B cell (primary cell): ENCODE measurements at regions of chr11 and their contacts with region 1.

Region 1: GRCh38 chr11:43311791-43312607 is at the start of gene API5:
- DNase-seq: peak; percentile 96
- ATAC-seq: peak; percentile 97
- H3K4me3 ChIP-seq: peak within 1 kb of the TSS; percentile 86 to 97 (median 95)
- H3K4me3 Mint-ChIP-seq: peak within 1 kb of the TSS; percentile 96
- H3K27ac ChIP-seq: peak within 1 kb of the TSS; percentile 67 to 84
- H3K27ac Mint-ChIP-seq: peak within 1 kb of the TSS; percentile 97
- H3K4me1 ChIP-seq: peaks cover 18 to 20% of the 10 kb centered on the region in 2 donors
- H3K4me1 Mint-ChIP-seq: peaks cover 45% of the 10 kb centered on the region
- H3K27me3 ChIP-seq: no peaks in the 10 kb centered on the region
- H3K27me3 Mint-ChIP-seq: no peaks in the 10 kb centered on the region
- CTCF ChIP-seq: peak; percentile 83
- total RNA-seq, gene API5: 88.3 and 94.7 TPM in 2 replicates

Region 2: DNA sequence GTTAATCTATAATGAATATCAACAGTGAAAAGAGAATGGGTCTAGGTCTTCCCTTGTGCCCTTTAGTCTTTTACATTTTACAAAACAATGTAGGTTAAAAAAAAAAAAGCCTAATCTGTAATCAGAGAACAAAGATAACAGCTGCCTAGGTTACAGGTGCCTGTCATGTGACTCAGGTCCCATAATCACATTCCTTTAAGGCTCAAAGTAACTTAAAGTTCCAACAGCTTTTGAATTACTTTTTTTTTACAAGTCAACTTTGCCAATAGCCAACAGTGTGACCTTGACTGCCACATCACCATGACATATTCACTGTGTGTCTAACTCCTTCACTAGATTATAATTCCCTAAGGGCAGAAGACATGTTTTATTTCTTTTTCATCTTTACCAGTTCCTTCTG is 237.2 kb before region 1 on chr11:
- CTCF ChIA-PET with region 1: no interaction called
- POLR2A ChIA-PET with region 1: no interaction called
- intact Hi-C with region 1: no loop called
- DNase-seq: no peak
- ATAC-seq: no peak
- H3K4me3 ChIP-seq: no peak overlapping the region
- H3K4me3 Mint-ChIP-seq: no peak overlapping the region
- H3K27ac ChIP-seq: no peak overlapping the region
- H3K27ac Mint-ChIP-seq: no peak overlapping the region
- H3K4me1 ChIP-seq: no peaks in the 10 kb centered on the region
- H3K4me1 Mint-ChIP-seq: no peaks in the 10 kb centered on the region
- H3K27me3 ChIP-seq: peaks cover 0 to 4% (median 0%) of the 10 kb centered on the region in 4 experiments
- H3K27me3 Mint-ChIP-seq: peaks cover 4% of the 10 kb centered on the region
- CTCF ChIP-seq: no peak

Region 3: GRCh38 chr11:43222215-43222614 is 89.8 kb before region 1 on chr11:
- CTCF ChIA-PET with region 1: no interaction called
- POLR2A ChIA-PET with region 1: no interaction called
- intact Hi-C with region 1: no loop called
- DNase-seq: no peak
- ATAC-seq: no peak
- H3K4me3 ChIP-seq: no peak overlapping the region
- H3K4me3 Mint-ChIP-seq: no peak overlapping the region
- H3K27ac ChIP-seq: no peak overlapping the region
- H3K27ac Mint-ChIP-seq: no peak overlapping the region
- H3K4me1 ChIP-seq: no peaks in the 10 kb centered on the region
- H3K4me1 Mint-ChIP-seq: no peaks in the 10 kb centered on the region
- H3K27me3 ChIP-seq: no peaks in the 10 kb centered on the region
- H3K27me3 Mint-ChIP-seq: no peaks in the 10 kb centered on the region
- CTCF ChIP-seq: no peak

Region 4: DNA sequence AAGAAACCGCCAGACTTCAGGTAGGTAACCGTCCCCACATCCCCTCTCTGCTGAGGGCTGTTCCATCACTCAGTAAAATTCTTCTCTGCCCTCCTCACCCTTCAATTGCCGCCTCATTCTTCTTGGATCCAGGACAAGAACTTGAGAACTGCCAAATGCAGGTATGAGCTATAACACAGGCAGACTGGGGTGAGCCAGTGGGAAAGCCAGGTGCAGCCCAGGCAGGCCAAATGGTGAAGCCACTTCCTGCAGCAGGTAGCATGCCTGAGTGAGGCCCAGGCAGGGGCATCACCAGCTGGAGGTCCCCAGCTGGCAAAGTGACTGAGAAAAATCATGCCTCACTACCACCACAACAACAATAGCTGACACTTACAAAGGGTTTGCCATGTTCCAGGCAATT is 22.6 kb before region 1 on chr11:
- CTCF ChIA-PET with region 1: no interaction called
- POLR2A ChIA-PET with region 1: no interaction called
- intact Hi-C with region 1: no loop called
- DNase-seq: no peak
- ATAC-seq: no peak
- H3K4me3 ChIP-seq: no peak overlapping the region
- H3K4me3 Mint-ChIP-seq: no peak overlapping the region
- H3K27ac ChIP-seq: no peak overlapping the region
- H3K27ac Mint-ChIP-seq: no peak overlapping the region
- H3K4me1 ChIP-seq: no peaks in the 10 kb centered on the region
- H3K4me1 Mint-ChIP-seq: no peaks in the 10 kb centered on the region
- H3K27me3 ChIP-seq: peaks cover 0 to 6% (median 4%) of the 10 kb centered on the region in 4 experiments
- H3K27me3 Mint-ChIP-seq: peaks cover 10% of the 10 kb centered on the region
- CTCF ChIP-seq: no peak

Region 5: GRCh38 chr11:43643898-43644620 is 332.1 kb after region 1 on chr11:
- CTCF ChIA-PET with region 1: no interaction called
- POLR2A ChIA-PET with region 1: no interaction called
- intact Hi-C with region 1: loop called (anchors 2 kb)
- DNase-seq: peak; percentile 87
- ATAC-seq: peak; percentile 99
- H3K4me3 ChIP-seq: peak overlapping the region; percentile 67 to 94 (median 84)
- H3K4me3 Mint-ChIP-seq: peak overlapping the region; percentile 89
- H3K27ac ChIP-seq: peak overlapping the region; percentile 32 to 74
- H3K27ac Mint-ChIP-seq: peak overlapping the region; percentile 78
- H3K4me1 ChIP-seq: peaks cover 7 to 10% of the 10 kb centered on the region in 2 donors
- H3K4me1 Mint-ChIP-seq: peaks cover 22% of the 10 kb centered on the region
- H3K27me3 ChIP-seq: peaks cover 0 to 17% (median 8%) of the 10 kb centered on the region in 4 experiments
- H3K27me3 Mint-ChIP-seq: peaks cover 16% of the 10 kb centered on the region
- CTCF ChIP-seq: no peak

Region 6: GRCh38 chr11:43880640-43881159 is 568.7 kb after region 1 on chr11 and contains the start of gene ALKBH3:
- CTCF ChIA-PET with region 1: no interaction called
- POLR2A ChIA-PET with region 1: no interaction called
- intact Hi-C with region 1: loop called (anchors 5 kb)
- DNase-seq: peak; percentile 93
- ATAC-seq: peak; percentile 99
- H3K4me3 ChIP-seq: peak within 1 kb of the TSS; percentile 54 to 96 (median 82)
- H3K4me3 Mint-ChIP-seq: peak within 1 kb of the TSS; percentile 95
- H3K27ac ChIP-seq: peak within 1 kb of the TSS; percentile 3 to 62
- H3K27ac Mint-ChIP-seq: peak within 1 kb of the TSS; percentile 82
- H3K4me1 ChIP-seq: peaks cover 14 to 15% of the 10 kb centered on the region in 2 donors
- H3K4me1 Mint-ChIP-seq: peaks cover 19% of the 10 kb centered on the region
- H3K27me3 ChIP-seq: peaks cover 0 to 26% (median 8%) of the 10 kb centered on the region in 4 experiments
- H3K27me3 Mint-ChIP-seq: peaks cover 26% of the 10 kb centered on the region
- CTCF ChIP-seq: no peak
- total RNA-seq, gene ALKBH3: 26.7 and 27.3 TPM in 2 replicates

Region 7: DNA sequence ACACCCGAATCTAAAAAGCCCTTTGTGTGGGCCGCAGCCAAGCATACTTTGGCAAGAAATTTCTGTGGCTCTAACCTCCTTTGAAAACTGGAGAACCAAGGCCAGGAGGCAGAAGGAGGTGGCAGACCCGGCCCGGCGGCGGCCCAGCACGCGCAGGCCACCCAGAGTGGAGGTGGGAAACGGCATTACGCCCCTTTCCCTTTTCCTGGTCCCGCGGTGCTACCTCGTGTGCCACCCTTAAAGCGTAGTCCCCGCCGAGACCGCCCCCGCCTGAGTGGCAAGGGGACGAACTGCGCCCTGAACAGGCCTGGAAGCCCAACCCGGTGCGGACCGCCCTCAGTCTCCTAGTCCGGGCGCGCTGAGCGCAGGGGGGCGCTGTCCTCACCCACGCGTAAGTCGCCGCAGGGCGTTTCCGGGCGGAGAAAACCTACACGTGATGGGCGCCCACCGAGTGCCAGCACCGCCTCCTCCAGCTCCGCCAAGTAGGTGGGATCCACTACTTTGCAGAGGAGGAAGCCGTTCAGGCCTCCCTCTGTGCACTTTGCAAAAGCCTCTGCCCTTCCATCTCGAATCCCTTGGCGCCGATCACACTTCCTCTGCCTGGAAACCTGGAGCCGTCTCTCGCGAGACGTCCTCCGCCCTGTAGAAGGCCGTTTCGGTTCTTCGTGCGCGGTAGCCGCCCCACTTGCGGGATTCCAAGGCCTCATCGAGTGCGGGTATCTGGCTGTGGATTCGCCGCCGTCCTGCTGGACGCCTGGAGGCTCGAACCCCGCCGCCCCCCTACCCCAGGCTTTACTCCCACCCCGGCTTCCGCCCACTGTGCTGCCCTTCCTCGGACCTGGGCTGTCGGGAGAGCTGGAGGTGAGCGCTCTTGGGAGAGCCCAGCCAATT is 754.1 kb after region 1 on chr11 and contains the start of gene ACCS:
- CTCF ChIA-PET with region 1: no interaction called
- POLR2A ChIA-PET with region 1: no interaction called
- intact Hi-C with region 1: loop called (anchors 10 kb)
- DNase-seq: peak; percentile 94
- ATAC-seq: peak; percentile 96
- H3K4me3 ChIP-seq: peak within 1 kb of the TSS; percentile 32 to 85 (median 81)
- H3K4me3 Mint-ChIP-seq: peak within 1 kb of the TSS; percentile 97
- H3K27ac ChIP-seq: peak within 1 kb of the TSS; percentile 71 to 77
- H3K27ac Mint-ChIP-seq: peak within 1 kb of the TSS; percentile 91
- H3K4me1 ChIP-seq: peaks cover 6 to 18% of the 10 kb centered on the region in 2 donors
- H3K4me1 Mint-ChIP-seq: peaks cover 22% of the 10 kb centered on the region
- H3K27me3 ChIP-seq: no peaks in the 10 kb centered on the region
- H3K27me3 Mint-ChIP-seq: no peaks in the 10 kb centered on the region
- CTCF ChIP-seq: peak; percentile 87
- total RNA-seq, gene ACCS: 56.2 and 59.5 TPM in 2 replicates